Activated naive CD4-positive, alpha-beta T cell treated with anti-CD3 and anti-CD28 coated beads, Interleukin-2, amount 10 ng/mL, durations not matched to agents 7 days and 5 days (primary cell): ENCODE measurements at regions of chr3 and their contacts with region 1.

Region 1: DNA sequence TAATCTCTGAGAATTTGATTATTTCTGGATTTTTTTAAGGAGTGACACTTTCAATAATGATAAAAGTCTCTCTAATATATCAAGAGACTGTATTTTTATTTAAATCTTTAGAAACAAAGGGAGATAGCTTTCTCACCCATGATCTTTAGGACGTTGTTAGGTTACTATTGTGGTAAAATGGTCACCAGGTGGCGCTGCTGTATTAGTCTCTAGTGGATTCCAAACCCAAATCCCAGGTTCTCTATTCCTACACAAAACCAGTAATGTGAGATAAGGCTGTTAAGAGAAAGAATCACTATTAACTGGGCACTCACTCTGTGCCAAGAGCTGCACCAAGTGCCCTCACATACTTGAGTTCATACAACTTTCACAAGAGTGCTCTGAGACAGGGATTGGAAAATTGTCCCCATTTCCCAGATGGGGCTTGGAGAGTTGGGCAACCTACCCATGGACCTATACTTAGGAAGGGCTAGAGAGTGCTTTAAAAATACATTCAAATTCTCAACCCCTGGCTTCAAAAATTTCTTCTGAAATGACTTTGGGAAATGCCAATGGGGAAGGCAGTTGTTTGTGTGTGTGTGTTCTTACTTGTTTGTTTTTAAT is 593.4 kb upstream of the TGFBR2 start:
- DNase-seq: peak; percentile 67
- H3K4me3 Mint-ChIP-seq: no peak overlapping the region
- H3K27ac Mint-ChIP-seq: no peak overlapping the region
- H3K4me1 Mint-ChIP-seq: no peaks in the 10 kb centered on the region
- H3K27me3 Mint-ChIP-seq: peaks cover 7% of the 10 kb centered on the region

Region 2: GRCh38 chr3:29789686-29790085 is 223.4 kb before region 1 on chr3:
- CTCF ChIA-PET with region 1: no interaction called
- DNase-seq: no peak
- H3K4me3 Mint-ChIP-seq: no peak overlapping the region
- H3K27ac Mint-ChIP-seq: no peak overlapping the region
- H3K4me1 Mint-ChIP-seq: no peaks in the 10 kb centered on the region
- H3K27me3 Mint-ChIP-seq: no peaks in the 10 kb centered on the region

Region 3: DNA sequence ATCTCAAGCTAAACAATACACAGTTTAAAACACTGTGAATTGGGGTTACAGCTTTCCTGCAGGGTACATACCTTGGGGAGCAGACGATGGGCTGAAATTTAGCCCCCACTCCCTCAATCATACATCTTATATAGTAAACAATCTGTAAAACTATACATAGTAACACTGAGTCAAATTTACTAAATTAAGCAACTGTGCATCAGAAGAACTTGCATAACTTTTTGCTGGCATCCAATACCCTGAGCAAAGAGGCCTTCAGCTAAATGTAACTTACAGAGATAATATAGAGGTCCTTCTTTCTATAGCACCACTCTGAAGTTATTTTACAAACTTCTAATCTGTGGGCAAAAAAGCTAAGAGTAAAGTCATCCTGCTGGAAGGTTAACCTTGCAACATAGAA is 10.2 kb before region 1 on chr3:
- CTCF ChIA-PET with region 1: interaction called, 10 read pairs
- DNase-seq: no peak
- H3K4me3 Mint-ChIP-seq: no peak overlapping the region
- H3K27ac Mint-ChIP-seq: no peak overlapping the region
- H3K4me1 Mint-ChIP-seq: no peaks in the 10 kb centered on the region
- H3K27me3 Mint-ChIP-seq: no peaks in the 10 kb centered on the region

Region 4: DNA sequence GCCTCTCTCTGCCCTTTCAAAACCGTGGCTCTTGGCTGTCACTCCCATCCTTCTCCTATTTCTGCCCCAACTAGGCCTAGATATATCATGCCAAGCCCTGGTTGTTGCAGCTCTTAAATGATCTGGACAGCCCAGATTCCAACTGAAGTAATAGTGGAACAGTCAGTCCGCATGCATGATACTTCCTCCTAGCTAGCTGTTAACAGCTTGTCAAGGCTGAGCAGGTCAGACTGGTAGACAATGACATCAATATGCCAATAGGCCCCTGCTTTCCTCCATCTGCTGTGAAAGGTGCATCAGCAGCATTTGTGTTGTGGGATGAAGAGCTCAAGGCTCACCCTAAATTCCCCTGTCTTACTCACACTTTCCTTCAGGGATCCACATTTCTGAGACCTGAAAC is 65.7 kb after region 1 on chr3:
- CTCF ChIA-PET with region 1: no interaction called
- DNase-seq: no peak
- H3K4me3 Mint-ChIP-seq: no peak overlapping the region
- H3K27ac Mint-ChIP-seq: no peak overlapping the region
- H3K4me1 Mint-ChIP-seq: no peaks in the 10 kb centered on the region
- H3K27me3 Mint-ChIP-seq: peaks cover 3% of the 10 kb centered on the region